ENCODE measurements at regions of chr13 and their contacts with region 1.

Region 1: GRCh38 chr13:52128714-52129700 is at the start of gene NEK5:
- DNase-seq: no peak
- ATAC-seq: peak; percentile 86
- H3K4me3 ChIP-seq: peak within 1 kb of the TSS; percentile 65
- H3K27ac ChIP-seq: no peak within 1 kb of the TSS
- H3K4me1 ChIP-seq: 0 out of 2 replicates have a peak, but pooled peaks cover 5% of the 10 kb centered on the region
- H3K27me3 ChIP-seq: peaks cover 2% of the 10 kb centered on the region in 2 experiments; a peak in 2 of 4 replicates
- CTCF ChIP-seq: peak; percentile 56 to 70 (median 57); a peak in 5 of 6 replicates
- EP300 ChIP-seq: no peak
- POLR2A ChIP-seq: no peak
- RAD21 ChIP-seq: peak; percentile 50
- polyA plus RNA-seq, gene NEK5: 0.04 to 0.16 TPM

Region 2: GRCh38 chr13:51881296-51881695 is 247.7 kb before region 1 on chr13:
- CTCF ChIA-PET with region 1: interaction called, 10 read pairs
- POLR2A ChIA-PET with region 1: no interaction called
- RAD21 ChIA-PET with region 1: no interaction called
- SMC1A ChIA-PET with region 1: no interaction called
- in situ Hi-C with region 1: no loop called
- intact Hi-C with region 1: no loop called
- DNase-seq: no peak
- ATAC-seq: no peak
- H3K4me3 ChIP-seq: no peak overlapping the region
- H3K27ac ChIP-seq: no peak overlapping the region
- H3K4me1 ChIP-seq: no peaks in the 10 kb centered on the region
- H3K27me3 ChIP-seq: 0 out of 4 replicates have a peak, but pooled peaks cover 0 to 3% of the 10 kb centered on the region in 2 experiments
- CTCF ChIP-seq: no peak
- EP300 ChIP-seq: no peak
- POLR2A ChIP-seq: no peak
- RAD21 ChIP-seq: no peak

Region 3: GRCh38 chr13:51911860-51912510 is 217.0 kb before region 1 on chr13:
- CTCF ChIA-PET with region 1: interaction called, 10 read pairs
- POLR2A ChIA-PET with region 1: no interaction called
- RAD21 ChIA-PET with region 1: interaction called, 3 read pairs
- SMC1A ChIA-PET with region 1: interaction called, 12 read pairs
- in situ Hi-C with region 1: no loop called
- intact Hi-C with region 1: no loop called
- DNase-seq: no peak
- ATAC-seq: peak; percentile 26
- H3K4me3 ChIP-seq: no peak overlapping the region
- H3K27ac ChIP-seq: no peak overlapping the region
- H3K4me1 ChIP-seq: peaks cover 6% of the 10 kb centered on the region; the same call in 1 of the 2 replicates
- H3K27me3 ChIP-seq: peaks cover 0 to 4% of the 10 kb centered on the region in 2 experiments; a peak in 2 of 4 replicates
- CTCF ChIP-seq: no peak; a peak in 1 of 6 replicates
- EP300 ChIP-seq: no peak
- POLR2A ChIP-seq: no peak
- RAD21 ChIP-seq: no peak

Region 4: GRCh38 chr13:52011632-52012511 is 117.1 kb before region 1 on chr13 and contains the start of gene ALG11:
- CTCF ChIA-PET with region 1: interaction called, 11 read pairs
- POLR2A ChIA-PET with region 1: no interaction called
- RAD21 ChIA-PET with region 1: no interaction called
- SMC1A ChIA-PET with region 1: interaction called, 3 read pairs
- in situ Hi-C with region 1: no loop called
- intact Hi-C with region 1: no loop called
- DNase-seq: peak; percentile 94
- ATAC-seq: peak; percentile 100
- H3K4me3 ChIP-seq: peak within 1 kb of the TSS; percentile 95
- H3K27ac ChIP-seq: peak within 1 kb of the TSS; percentile 49
- H3K4me1 ChIP-seq: no peaks in the 10 kb centered on the region; the same call in 1 of the 2 replicates
- H3K27me3 ChIP-seq: peaks cover 2 to 13% of the 10 kb centered on the region in 2 experiments; a peak in 2 of 4 replicates
- CTCF ChIP-seq: no peak
- EP300 ChIP-seq: no peak
- POLR2A ChIP-seq: peak; percentile 92
- RAD21 ChIP-seq: no peak
- polyA plus RNA-seq, gene ALG11: 10.4 to 16.0 TPM

Measured in GM12878 (cell line).